ENCODE measurements at regions of chr7 and their contacts with region 1.

Region 1: GRCh38 chr7:104231054-104232046 is 23.5 kb upstream of the ORC5 start:
- DNase-seq: peak; percentile 61
- ATAC-seq: peak; percentile 95
- H3K4me3 ChIP-seq: no peak overlapping the region
- H3K27ac ChIP-seq: no peak overlapping the region
- H3K4me1 ChIP-seq: no peaks in the 10 kb centered on the region
- H3K27me3 ChIP-seq: peaks cover 12% of the 10 kb centered on the region
- CTCF ChIP-seq: peak; percentile 75

Region 2: GRCh38 chr7:104252404-104253134 is 21.2 kb after region 1 on chr7:
- CTCF ChIA-PET with region 1: interaction called, 9 read pairs
- POLR2A ChIA-PET with region 1: no interaction called
- intact Hi-C with region 1: loop called (anchors 1 kb)
- DNase-seq: peak; percentile 25
- ATAC-seq: peak; percentile 76
- H3K4me3 ChIP-seq: no peak overlapping the region
- H3K27ac ChIP-seq: no peak overlapping the region
- H3K4me1 ChIP-seq: no peaks in the 10 kb centered on the region
- H3K27me3 ChIP-seq: peaks cover 17% of the 10 kb centered on the region; the same call in 1 of the 2 replicates
- CTCF ChIP-seq: peak; percentile 48

Region 3: GRCh38 chr7:104267701-104268368 is 36.5 kb after region 1 on chr7:
- CTCF ChIA-PET with region 1: interaction called, 9 read pairs
- POLR2A ChIA-PET with region 1: no interaction called
- intact Hi-C with region 1: loop called (anchors 1 kb)
- DNase-seq: peak; percentile 28
- ATAC-seq: peak; percentile 45; the same call in 1 of the 2 replicates
- H3K4me3 ChIP-seq: no peak overlapping the region
- H3K27ac ChIP-seq: no peak overlapping the region
- H3K4me1 ChIP-seq: no peaks in the 10 kb centered on the region
- H3K27me3 ChIP-seq: no peaks in the 10 kb centered on the region; the same call in 1 of the 2 replicates
- CTCF ChIP-seq: peak; percentile 66

Region 4: GRCh38 chr7:104848138-104848990 is 617.0 kb after region 1 on chr7:
- CTCF ChIA-PET with region 1: interaction called, 3 read pairs
- POLR2A ChIA-PET with region 1: no interaction called
- intact Hi-C with region 1: loop called (anchors 5 kb)
- DNase-seq: peak; percentile 78
- ATAC-seq: peak; percentile 80
- H3K4me3 ChIP-seq: no peak overlapping the region
- H3K27ac ChIP-seq: no peak overlapping the region
- H3K4me1 ChIP-seq: no peaks in the 10 kb centered on the region
- H3K27me3 ChIP-seq: peaks cover 50% of the 10 kb centered on the region
- CTCF ChIP-seq: peak; percentile 92